ENCODE measurements at regions of chr1 and their contacts with region 1.

Region 1: DNA sequence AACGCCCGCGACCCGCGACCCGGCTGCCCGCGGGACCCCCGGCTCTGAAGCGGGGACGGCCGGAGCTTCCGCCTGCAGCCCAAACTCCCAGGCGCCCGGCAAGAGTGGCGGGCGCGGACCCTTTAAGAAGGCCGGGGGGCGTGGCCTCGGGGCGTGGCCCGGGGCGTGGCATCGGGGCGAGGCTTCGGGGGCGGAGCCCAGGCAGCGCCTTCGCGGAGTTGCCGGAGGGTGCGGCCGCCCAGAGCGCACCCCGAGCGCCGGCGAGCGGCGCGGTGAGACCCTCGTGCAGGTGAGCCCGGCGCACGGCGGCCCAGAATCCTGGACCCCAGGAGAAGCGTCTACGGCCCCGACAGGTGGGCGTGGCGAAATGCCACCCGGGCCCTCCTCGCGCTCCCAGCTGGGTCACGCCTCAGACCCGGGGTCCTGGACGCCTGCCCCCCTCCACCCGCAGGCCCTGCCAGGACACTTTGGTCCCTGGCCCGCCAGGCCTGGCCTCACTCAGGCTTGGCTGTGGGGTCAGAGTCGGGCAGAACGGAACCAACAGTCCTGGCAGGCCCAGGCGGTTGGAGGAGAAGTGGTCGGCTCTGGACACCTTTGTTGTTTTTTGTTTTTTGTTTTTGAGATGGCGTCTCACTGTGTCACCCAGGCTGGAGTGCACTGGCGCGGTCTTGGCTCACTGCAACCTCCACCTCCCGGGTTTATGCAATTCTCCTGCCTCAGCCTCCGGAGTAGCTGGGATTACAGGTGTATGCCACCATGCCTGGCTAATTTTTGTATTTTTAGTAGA is 14.4 kb downstream of the RNF223 start:
- DNase-seq: peak in 1 of 2 experiments; percentile 98
- H3K4me3 ChIP-seq: peak overlapping the region; percentile 43 to 76 (median 48)
- H3K27ac ChIP-seq: no peak overlapping the region
- H3K4me1 ChIP-seq: peaks cover 0 to 18% (median 11%) of the 10 kb centered on the region in 4 experiments; a peak in 5 of 7 replicates
- H3K27me3 ChIP-seq: peaks cover 9 to 49% (median 34%) of the 10 kb centered on the region in 4 experiments
- CTCF ChIP-seq: no peak
- EP300 ChIP-seq: no peak
- POLR2A ChIP-seq: no peak
- RAD21 ChIP-seq: no peak

Region 2: DNA sequence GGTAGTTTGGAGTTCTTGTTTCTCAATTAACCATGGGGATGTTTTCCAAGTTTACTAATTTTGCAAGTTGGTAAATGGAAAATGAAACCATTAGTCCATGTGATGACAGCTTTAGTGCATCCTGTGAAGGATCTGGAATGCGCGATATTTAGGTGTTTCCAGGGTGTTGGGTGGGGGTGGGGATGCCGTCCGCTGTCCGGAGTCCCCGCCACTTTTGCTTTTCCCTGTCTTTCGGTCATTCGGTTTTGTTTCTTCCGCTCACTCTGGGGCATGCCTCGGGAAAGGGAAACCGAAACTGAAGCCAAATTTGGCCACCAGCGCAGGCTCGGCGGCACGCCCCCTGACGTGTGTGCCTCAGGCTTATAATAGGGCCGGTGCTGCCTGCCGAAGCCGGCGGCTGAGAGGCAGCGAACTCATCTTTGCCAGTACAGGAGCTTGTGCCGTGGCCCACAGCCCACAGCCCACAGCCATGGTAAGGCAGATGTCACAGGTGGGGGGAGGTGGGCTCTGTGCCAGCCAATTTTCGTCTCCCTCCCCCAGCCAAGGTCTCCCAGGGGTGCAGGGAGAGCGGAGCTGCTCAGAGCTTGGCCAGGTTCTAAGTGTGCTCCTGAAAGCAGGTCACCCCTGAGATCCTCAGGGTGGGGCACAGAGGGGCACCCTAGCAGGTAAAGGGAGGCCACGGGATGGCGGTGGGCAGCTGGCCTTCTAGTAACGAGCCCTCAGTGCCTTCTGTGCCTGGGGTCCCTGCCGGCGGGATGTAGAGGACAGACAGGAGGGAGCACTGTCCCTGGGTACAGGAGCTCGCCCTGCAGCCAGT is 46.4 kb before region 1 on chr1 and contains the start of gene ISG15:
- CTCF ChIA-PET with region 1: interaction called, 13 read pairs
- POLR2A ChIA-PET with region 1: interaction called, 5 read pairs
- DNase-seq: peak in 1 of 2 experiments; percentile 86
- H3K4me3 ChIP-seq: peak within 1 kb of the TSS; percentile 37 to 64 (median 59)
- H3K27ac ChIP-seq: peak within 1 kb of the TSS; percentile 61; the same call in 1 of the 2 replicates
- H3K4me1 ChIP-seq: peaks cover 0 to 21% (median 15%) of the 10 kb centered on the region in 4 experiments; a peak in 6 of 7 replicates
- H3K27me3 ChIP-seq: peaks cover 0 to 3% (median 0%) of the 10 kb centered on the region in 4 experiments; a peak in 3 of 7 replicates
- CTCF ChIP-seq: no peak
- EP300 ChIP-seq: no peak
- POLR2A ChIP-seq: peak in 1 of 2 experiments; percentile 53; a peak in 1 of 3 replicates
- RAD21 ChIP-seq: no peak
- total RNA-seq, gene ISG15: 27.7 and 29.3 TPM in 2 replicates

Region 3: GRCh38 chr1:1024771-1025451 is 34.8 kb before region 1 on chr1:
- CTCF ChIA-PET with region 1: interaction called, 20 read pairs
- POLR2A ChIA-PET with region 1: interaction called, 9 read pairs
- DNase-seq: no peak
- H3K4me3 ChIP-seq: peak overlapping the region in 1 of 4 experiments; percentile 36; a peak in 2 of 8 replicates
- H3K27ac ChIP-seq: peak overlapping the region; percentile 61; the same call in 1 of the 2 replicates
- H3K4me1 ChIP-seq: peaks cover 2 to 57% (median 38%) of the 10 kb centered on the region in 4 experiments
- H3K27me3 ChIP-seq: no peaks in the 10 kb centered on the region
- CTCF ChIP-seq: no peak
- EP300 ChIP-seq: peak; percentile 32 to 87; a peak in 2 of 3 replicates
- POLR2A ChIP-seq: peak in 1 of 2 experiments; percentile 30; a peak in 1 of 3 replicates
- RAD21 ChIP-seq: no peak

Measured in H1 (cell line).